ENCODE measurements at regions of chr5 and their contacts with region 1.

Region 1: GRCh38 chr5:32092938-32093812 is 80.9 kb downstream of the GOLPH3 start:
- DNase-seq: peak; percentile 77
- H3K4me3 ChIP-seq: no peak overlapping the region
- H3K27ac ChIP-seq: no peak overlapping the region
- H3K4me1 ChIP-seq: peaks cover 11% of the 10 kb centered on the region
- H3K27me3 ChIP-seq: no peaks in the 10 kb centered on the region
- CTCF ChIP-seq: peak; percentile 69 to 76
- POLR2A ChIP-seq: no peak

Region 2: GRCh38 chr5:31581498-31582099 is 511.6 kb before region 1 on chr5:
- CTCF ChIA-PET with region 1: interaction called, 19 read pairs
- POLR2A ChIA-PET with region 1: no interaction called
- dilution Hi-C with region 1: no loop called
- intact Hi-C with region 1: loop called (anchors 1 kb)
- DNase-seq: peak; percentile 32
- H3K4me3 ChIP-seq: no peak overlapping the region
- H3K27ac ChIP-seq: no peak overlapping the region
- H3K4me1 ChIP-seq: no peaks in the 10 kb centered on the region
- H3K27me3 ChIP-seq: peaks cover 0 to 2% of the 10 kb centered on the region in 2 experiments
- CTCF ChIP-seq: peak; percentile 8 to 14
- POLR2A ChIP-seq: no peak

Region 3: DNA sequence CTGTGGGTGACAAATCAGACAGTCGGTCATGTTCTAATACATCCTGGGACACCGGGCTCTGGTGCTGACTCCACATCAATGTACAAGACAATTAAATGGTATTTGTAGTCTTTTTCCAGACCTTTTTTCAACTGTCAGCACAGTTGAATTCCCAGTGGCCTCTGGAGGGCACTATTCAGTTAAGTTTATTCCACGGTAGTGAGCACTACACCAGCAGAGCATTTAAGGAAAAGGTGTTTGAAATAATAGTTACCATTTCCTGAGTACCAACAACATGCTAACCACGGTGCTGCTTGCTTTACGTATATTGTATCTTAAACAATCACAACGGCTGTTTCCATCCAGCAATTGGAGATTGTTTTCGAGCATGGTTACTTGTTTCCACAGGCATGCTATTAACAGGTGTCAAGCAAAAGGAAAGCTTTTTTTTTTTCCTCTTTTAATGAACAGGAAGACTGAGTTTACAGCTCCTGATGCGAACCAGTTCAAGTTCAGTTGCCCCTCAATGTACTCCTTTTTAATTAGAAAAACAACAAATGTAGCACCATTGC is 267.6 kb before region 1 on chr5:
- CTCF ChIA-PET with region 1: interaction called, 100 read pairs
- POLR2A ChIA-PET with region 1: no interaction called
- dilution Hi-C with region 1: no loop called
- intact Hi-C with region 1: loop called (anchors 1 kb)
- DNase-seq: peak; percentile 72
- H3K4me3 ChIP-seq: no peak overlapping the region
- H3K27ac ChIP-seq: no peak overlapping the region
- H3K4me1 ChIP-seq: no peaks in the 10 kb centered on the region
- H3K27me3 ChIP-seq: no peaks in the 10 kb centered on the region
- CTCF ChIP-seq: peak; percentile 58 to 64
- POLR2A ChIP-seq: no peak

Region 4: DNA sequence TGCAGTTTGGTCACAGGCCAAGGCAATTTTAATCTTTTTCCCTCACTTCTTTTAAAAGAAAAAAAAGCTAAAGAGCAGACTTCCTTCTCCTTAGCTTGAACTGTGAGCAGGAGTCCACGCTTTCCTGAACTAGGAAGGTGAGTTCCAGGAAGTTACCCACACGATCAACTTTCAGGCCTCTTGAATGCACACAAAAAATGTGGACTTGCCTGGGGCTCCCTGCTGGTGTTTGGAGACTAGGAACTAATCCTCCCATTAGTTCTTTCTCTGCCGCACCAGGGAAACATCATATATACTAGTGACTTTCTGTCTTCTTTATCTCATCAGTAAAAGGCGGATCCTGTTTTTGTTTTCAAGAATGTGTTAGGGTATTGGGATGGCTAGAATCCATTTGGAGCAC is 159.0 kb before region 1 on chr5:
- CTCF ChIA-PET with region 1: interaction called, 6 read pairs
- POLR2A ChIA-PET with region 1: no interaction called
- dilution Hi-C with region 1: no loop called
- intact Hi-C with region 1: loop called (anchors 1 kb)
- DNase-seq: no peak
- H3K4me3 ChIP-seq: no peak overlapping the region
- H3K27ac ChIP-seq: no peak overlapping the region
- H3K4me1 ChIP-seq: peaks cover 2% of the 10 kb centered on the region
- H3K27me3 ChIP-seq: no peaks in the 10 kb centered on the region
- CTCF ChIP-seq: no peak
- POLR2A ChIP-seq: no peak

Region 5: GRCh38 chr5:32329308-32329834 is 236.2 kb after region 1 on chr5:
- CTCF ChIA-PET with region 1: interaction called, 6 read pairs
- POLR2A ChIA-PET with region 1: no interaction called
- dilution Hi-C with region 1: no loop called
- intact Hi-C with region 1: loop called (anchors 2 kb)
- DNase-seq: peak; percentile 80
- H3K4me3 ChIP-seq: no peak overlapping the region
- H3K27ac ChIP-seq: no peak overlapping the region
- H3K4me1 ChIP-seq: no peaks in the 10 kb centered on the region
- H3K27me3 ChIP-seq: no peaks in the 10 kb centered on the region
- CTCF ChIP-seq: peak; percentile 60 to 80
- POLR2A ChIP-seq: no peak